ENCODE measurements at regions of chr1 and their contacts with region 1.

Region 1: DNA sequence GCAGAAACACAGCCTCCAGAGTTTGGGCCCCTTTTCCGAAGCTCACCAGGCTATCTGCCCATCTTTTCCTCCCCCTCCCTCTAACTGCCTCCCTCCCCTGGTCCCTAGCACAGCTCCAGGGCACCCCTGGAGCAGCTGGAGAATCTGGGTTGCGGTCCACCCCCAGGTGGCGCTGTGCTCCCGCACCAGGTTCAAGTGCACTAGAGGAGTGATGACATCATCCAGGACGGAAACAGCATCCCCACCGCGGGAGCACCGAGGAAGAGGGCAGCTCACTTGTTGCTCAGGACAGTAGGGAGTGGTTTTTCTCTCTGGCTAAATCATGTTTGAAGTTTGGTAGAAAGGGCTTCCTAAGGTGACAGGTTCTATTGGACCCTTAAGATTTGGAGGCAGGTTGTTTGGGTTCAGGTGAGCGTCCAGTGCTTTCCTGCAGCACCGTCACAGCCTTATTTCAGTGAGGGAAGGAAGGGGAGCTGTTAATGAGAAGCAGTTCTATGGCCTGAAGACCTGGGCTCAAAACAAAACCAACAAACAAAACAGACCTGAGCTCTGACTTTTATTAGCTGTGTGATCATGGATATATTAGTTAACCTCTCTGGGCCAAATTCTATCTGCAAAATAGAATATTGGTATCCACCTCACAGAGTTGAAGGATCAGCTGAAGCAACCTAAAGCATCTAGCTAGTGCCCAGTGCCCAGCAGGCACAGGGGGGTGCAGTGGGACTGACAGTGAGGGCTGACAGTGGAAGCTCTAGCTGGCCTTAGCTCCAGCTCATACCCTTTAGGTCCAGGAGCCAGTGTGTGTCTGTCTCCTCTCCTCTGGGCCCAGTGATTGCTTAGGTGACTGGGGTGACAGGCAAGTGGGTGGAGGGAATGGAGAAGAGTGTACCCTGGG is 7.5 kb downstream of the SHISA4 start:
- DNase-seq: peak; percentile 93
- H3K4me3 ChIP-seq: no peak overlapping the region
- H3K27ac ChIP-seq: no peak overlapping the region
- H3K4me1 ChIP-seq: no peaks in the 10 kb centered on the region
- H3K27me3 ChIP-seq: no peaks in the 10 kb centered on the region
- CTCF ChIP-seq: peak; percentile 99

Region 2: GRCh38 chr1:201828820-201829774 is 67.1 kb before region 1 on chr1 and contains the start of gene IPO9:
- CTCF ChIA-PET with region 1: no interaction called
- POLR2A ChIA-PET with region 1: no interaction called
- intact Hi-C with region 1: no loop called
- DNase-seq: peak; percentile 97
- H3K4me3 ChIP-seq: peak within 1 kb of the TSS; percentile 94
- H3K27ac ChIP-seq: peak within 1 kb of the TSS; percentile 96
- H3K4me1 ChIP-seq: peaks cover 18% of the 10 kb centered on the region
- H3K27me3 ChIP-seq: no peaks in the 10 kb centered on the region
- CTCF ChIP-seq: peak; percentile 90
- total RNA-seq, gene IPO9: 121 and 136 TPM in 2 replicates

Region 3: GRCh38 chr1:201970334-201971159 is 74.4 kb after region 1 on chr1:
- CTCF ChIA-PET with region 1: interaction called, 24 read pairs
- POLR2A ChIA-PET with region 1: no interaction called
- intact Hi-C with region 1: loop called (anchors 1 kb)
- DNase-seq: no peak
- H3K4me3 ChIP-seq: no peak overlapping the region
- H3K27ac ChIP-seq: no peak overlapping the region
- H3K4me1 ChIP-seq: no peaks in the 10 kb centered on the region
- H3K27me3 ChIP-seq: no peaks in the 10 kb centered on the region
- CTCF ChIP-seq: no peak

Region 4: GRCh38 chr1:202311875-202312635 is 415.9 kb after region 1 on chr1:
- CTCF ChIA-PET with region 1: no interaction called
- POLR2A ChIA-PET with region 1: no interaction called
- intact Hi-C with region 1: no loop called
- DNase-seq: peak; percentile 67
- H3K4me3 ChIP-seq: no peak overlapping the region
- H3K27ac ChIP-seq: no peak overlapping the region
- H3K4me1 ChIP-seq: peaks cover 12% of the 10 kb centered on the region
- H3K27me3 ChIP-seq: no peaks in the 10 kb centered on the region
- CTCF ChIP-seq: no peak

Measured in A673 (cell line).